ENCODE measurements at regions of chr4 and their contacts with region 1.

Region 1: DNA sequence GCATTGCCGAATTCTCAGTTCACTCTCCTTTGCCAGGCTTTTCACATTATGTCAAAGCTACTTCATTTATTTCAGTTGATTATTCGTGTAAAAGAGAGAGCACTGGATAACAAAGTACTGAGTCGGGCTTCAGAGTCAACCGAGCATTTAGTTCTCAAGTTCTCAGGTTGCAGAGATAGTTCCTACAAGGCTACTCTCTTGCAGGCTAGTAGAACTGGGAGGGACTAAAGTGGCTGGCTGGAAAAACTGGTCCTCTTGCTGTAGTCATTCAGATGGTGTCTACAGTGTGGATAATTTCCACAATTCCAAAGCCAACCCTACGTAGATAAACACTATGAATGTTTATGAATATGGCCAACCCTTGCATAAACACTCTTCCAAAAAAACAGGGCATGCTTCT is 4.6 kb upstream of the CCNG2 start:
- DNase-seq: no peak
- H3K4me3 ChIP-seq: no peak overlapping the region
- CTCF ChIP-seq: no peak
- POLR2A ChIP-seq: no peak

Region 2: DNA sequence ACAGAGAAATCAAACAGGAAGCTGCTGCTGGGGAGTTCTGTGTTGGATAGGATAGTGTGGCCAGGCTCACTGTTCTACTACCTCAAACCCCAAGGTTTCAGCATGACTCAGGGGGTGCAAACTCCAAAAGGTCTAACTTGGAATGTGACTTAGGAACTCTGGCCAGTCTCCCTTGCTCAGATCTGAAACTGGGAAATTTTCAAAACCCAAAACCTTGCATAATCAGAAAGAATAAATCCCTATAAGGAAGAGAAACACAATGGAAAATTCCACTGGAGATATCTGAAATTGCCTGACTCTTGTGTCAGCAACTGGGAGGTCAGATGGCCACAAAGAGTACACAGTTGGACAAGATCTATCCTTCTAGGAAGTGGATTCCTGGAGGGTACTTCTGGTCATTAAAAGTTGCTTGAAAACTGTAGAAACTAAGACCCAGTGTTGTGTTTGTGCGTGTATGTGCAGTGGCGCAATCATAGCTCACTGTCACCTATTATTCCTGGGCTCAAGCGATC is 1308.2 kb before region 1 on chr4:
- intact Hi-C with region 1: loop called (anchors 5 kb)
- DNase-seq: no peak
- H3K4me3 ChIP-seq: no peak overlapping the region
- CTCF ChIP-seq: no peak
- POLR2A ChIP-seq: no peak

Region 3: GRCh38 chr4:77443941-77444340 is 291.5 kb after region 1 on chr4:
- intact Hi-C with region 1: no loop called
- DNase-seq: no peak
- H3K4me3 ChIP-seq: no peak overlapping the region
- CTCF ChIP-seq: no peak
- POLR2A ChIP-seq: no peak

Measured in lower leg skin (tissue), 4 donors.